ENCODE measurements at regions of chr3 and their contacts with region 1.

Region 1: DNA sequence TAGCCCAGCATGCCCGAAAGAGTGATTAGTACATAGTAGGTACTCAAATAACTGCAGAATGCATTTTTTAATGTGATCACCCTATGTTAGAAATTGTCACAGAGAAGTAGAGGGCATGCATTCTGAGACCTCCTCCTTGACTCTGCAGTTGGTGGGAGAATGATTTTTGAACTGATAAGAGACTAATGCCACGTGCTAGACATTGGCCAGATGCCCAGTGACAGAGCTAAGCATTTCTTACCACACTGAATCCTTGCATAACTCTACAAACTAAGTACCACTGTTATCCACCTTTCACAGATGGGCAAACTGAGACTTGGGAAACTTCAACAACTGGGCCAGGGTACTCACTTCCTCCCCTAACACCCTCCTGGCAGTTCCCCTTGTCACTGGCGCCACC is 33.5 kb upstream of the SPATA12 start:
- DNase-seq: no peak
- ATAC-seq: no peak
- H3K4me3 ChIP-seq: no peak overlapping the region
- H3K27ac ChIP-seq: no peak overlapping the region
- H3K4me1 ChIP-seq: peaks cover 14% of the 10 kb centered on the region
- H3K27me3 ChIP-seq: no peaks in the 10 kb centered on the region
- CTCF ChIP-seq: no peak
- EP300 ChIP-seq: no peak
- POLR2A ChIP-seq: no peak
- RAD21 ChIP-seq: no peak

Region 2: GRCh38 chr3:56988458-56989168 is 38.3 kb before region 1 on chr3:
- CTCF ChIA-PET with region 1: no interaction called
- POLR2A ChIA-PET with region 1: no interaction called
- in situ Hi-C with region 1: no loop called
- intact Hi-C with region 1: no loop called
- DNase-seq: peak; percentile 73
- ATAC-seq: peak; percentile 61
- H3K4me3 ChIP-seq: peak overlapping the region in 2 of 3 experiments; percentile 24 to 68; a peak in 3 of 6 replicates
- H3K27ac ChIP-seq: no peak overlapping the region
- H3K4me1 ChIP-seq: peaks cover 64% of the 10 kb centered on the region
- H3K27me3 ChIP-seq: no peaks in the 10 kb centered on the region
- CTCF ChIP-seq: peak; percentile 86
- EP300 ChIP-seq: no peak
- POLR2A ChIP-seq: no peak
- RAD21 ChIP-seq: peak; percentile 82

Region 3: DNA sequence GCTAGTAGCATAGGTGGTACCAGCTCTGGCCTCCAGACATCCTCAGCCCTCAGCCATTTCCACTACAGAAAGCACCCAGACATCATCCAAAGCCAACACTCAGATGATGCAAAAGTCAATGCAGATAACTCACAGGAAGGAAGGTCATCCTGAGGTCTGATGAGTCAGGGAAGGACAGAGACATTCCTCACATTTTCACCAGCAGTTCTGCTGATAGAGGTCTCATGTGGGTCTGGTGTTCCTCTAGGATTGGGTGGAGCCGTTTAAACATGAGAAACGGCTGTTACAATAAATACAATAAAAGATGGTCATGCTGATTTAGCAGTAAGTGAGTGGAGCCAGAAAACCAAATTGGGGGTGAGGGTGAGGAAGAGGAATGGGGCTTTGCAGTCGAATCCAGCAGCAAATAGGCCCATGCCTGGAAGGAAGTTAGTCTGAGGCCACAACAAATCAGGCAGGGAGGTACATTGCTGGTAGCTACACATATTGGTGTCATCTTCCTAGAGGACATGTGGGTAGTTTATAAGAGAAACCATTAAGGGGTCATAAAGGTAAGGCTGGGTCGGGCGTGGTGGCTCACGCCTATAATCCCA is 948.0 kb after region 1 on chr3:
- CTCF ChIA-PET with region 1: no interaction called
- POLR2A ChIA-PET with region 1: no interaction called
- in situ Hi-C with region 1: no loop called
- intact Hi-C with region 1: loop called (anchors 10 kb)
- DNase-seq: peak; percentile 96
- ATAC-seq: peak; percentile 89
- H3K4me3 ChIP-seq: no peak overlapping the region
- H3K27ac ChIP-seq: peak overlapping the region; percentile 1
- H3K4me1 ChIP-seq: peaks cover 78% of the 10 kb centered on the region
- H3K27me3 ChIP-seq: no peaks in the 10 kb centered on the region
- CTCF ChIP-seq: no peak
- EP300 ChIP-seq: peak; percentile 62 to 80; a peak in 3 of 4 replicates
- POLR2A ChIP-seq: no peak
- RAD21 ChIP-seq: no peak

Measured in HepG2 (cell line).